ENCODE measurements at regions of chr22 and their contacts with region 1.

Region 1: DNA sequence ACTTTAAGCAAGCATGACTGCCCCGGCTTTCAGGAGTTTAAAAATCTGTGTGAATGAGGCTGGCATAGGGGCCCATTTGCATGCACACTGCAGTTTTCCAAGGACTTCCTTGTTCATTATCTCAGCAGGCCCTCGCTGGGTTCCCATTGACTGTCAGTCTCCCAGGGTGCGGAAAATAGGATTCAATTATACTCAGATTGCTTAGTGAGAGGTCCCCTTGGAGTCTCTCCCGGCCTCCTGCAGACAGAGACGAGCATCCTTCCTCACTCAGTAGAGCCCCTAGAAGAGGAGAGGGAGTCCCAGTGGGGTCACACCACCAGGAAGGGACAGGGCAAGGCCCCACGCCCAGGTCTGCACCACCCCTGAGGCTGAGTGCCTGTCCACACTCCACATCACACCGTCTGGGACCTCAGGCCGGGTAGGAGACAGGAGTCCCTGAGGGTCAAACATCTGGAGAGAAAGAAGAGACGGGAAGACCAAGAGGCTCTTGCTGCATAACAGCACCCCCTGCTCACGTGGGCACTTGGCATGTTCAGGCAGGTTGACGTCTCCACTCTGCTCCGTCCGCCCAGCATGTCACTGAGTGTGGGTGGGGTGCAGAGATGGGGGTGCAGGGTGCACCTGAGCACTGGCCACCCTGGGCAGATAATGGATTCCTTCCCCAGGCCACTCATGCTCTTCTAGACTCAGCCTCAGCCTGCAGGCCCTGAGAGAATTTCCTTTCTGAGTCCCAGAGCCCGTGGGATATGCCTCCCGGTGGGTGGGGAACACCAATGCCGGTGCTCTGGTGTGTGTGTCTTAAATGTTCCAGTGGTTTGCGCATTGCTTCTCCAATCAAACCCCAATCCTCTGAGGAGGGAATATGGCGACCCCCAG is 58.8 kb downstream of the MCM5 start:
- DNase-seq: no peak
- H3K4me3 ChIP-seq: no peak overlapping the region
- H3K27ac ChIP-seq: no peak overlapping the region
- H3K4me1 ChIP-seq: no peaks in the 10 kb centered on the region
- H3K27me3 ChIP-seq: no peaks in the 10 kb centered on the region
- CTCF ChIP-seq: no peak

Region 2: GRCh38 chr22:35705141-35705540 is 246.4 kb after region 1 on chr22:
- CTCF ChIA-PET with region 1: interaction called, 12 read pairs
- POLR2A ChIA-PET with region 1: no interaction called
- intact Hi-C with region 1: no loop called
- DNase-seq: peak; percentile 19 to 88
- H3K4me3 ChIP-seq: no peak overlapping the region
- H3K27ac ChIP-seq: peak overlapping the region; percentile 55
- H3K4me1 ChIP-seq: peaks cover 15% of the 10 kb centered on the region
- H3K27me3 ChIP-seq: no peaks in the 10 kb centered on the region
- CTCF ChIP-seq: no peak

Measured in PC-9 (cell line).